Gastrocnemius medialis (tissue), 4 donors: ENCODE measurements at regions of chr1 and their contacts with region 1.

Region 1: GRCh38 chr1:100351095-100351891 is 1.0 kb upstream of the CDC14A start:
- DNase-seq: peak; percentile 69 to 71
- ATAC-seq: peak; percentile 75 to 76
- H3K4me3 ChIP-seq: peak overlapping the region; percentile 94 to 98 (median 96)
- H3K27ac ChIP-seq: peak overlapping the region; percentile 84 to 91 (median 88)
- H3K4me1 ChIP-seq: peaks cover 17 to 20% of the 10 kb centered on the region in 2 donors
- H3K27me3 ChIP-seq: no peaks in the 10 kb centered on the region
- CTCF ChIP-seq: peak in 1 of 5 experiments; percentile 28
- POLR2A ChIP-seq: peak; percentile 19 to 42

Region 2: GRCh38 chr1:100037927-100038659 is 313.2 kb before region 1 on chr1:
- in situ Hi-C with region 1: no loop called
- intact Hi-C with region 1: loop called (anchors 5 kb)
- DNase-seq: peak; percentile 81 to 85
- ATAC-seq: peak; percentile 91 to 93
- H3K4me3 ChIP-seq: peak overlapping the region; percentile 86 to 90 (median 88)
- H3K27ac ChIP-seq: peak overlapping the region; percentile 93 to 96 (median 96)
- H3K4me1 ChIP-seq: peaks cover 24 to 33% of the 10 kb centered on the region in 2 donors
- H3K27me3 ChIP-seq: no peaks in the 10 kb centered on the region
- CTCF ChIP-seq: no peak
- POLR2A ChIP-seq: peak; percentile 94 to 95

Region 3: DNA sequence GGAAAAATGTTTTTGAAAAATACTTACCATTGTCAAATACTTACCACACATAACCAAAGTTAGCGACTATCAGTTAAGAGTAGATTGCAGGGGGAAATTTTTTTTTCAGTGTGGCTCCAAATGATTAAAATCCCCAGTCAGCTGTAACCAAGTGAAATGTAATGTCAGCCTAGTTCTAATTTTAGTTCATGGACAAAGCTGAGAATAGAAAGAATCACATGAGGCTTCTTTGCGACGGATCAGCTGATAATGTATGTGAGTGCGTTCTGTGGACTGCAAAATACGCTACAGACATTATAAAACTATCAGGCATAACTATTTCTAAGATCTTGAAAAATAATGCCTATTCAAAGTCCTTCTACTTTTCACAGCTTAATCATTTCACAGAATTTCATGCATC is 173.2 kb before region 1 on chr1 and contains the start of gene LRRC39:
- in situ Hi-C with region 1: no loop called
- intact Hi-C with region 1: loop called (anchors 5 kb)
- DNase-seq: no peak
- ATAC-seq: peak; percentile 94 to 98
- H3K4me3 ChIP-seq: peak within 1 kb of the TSS; percentile 46 to 55 (median 50)
- H3K27ac ChIP-seq: peak within 1 kb of the TSS; percentile 76 to 89 (median 82)
- H3K4me1 ChIP-seq: peaks cover 6 to 17% of the 10 kb centered on the region in 2 donors
- H3K27me3 ChIP-seq: no peaks in the 10 kb centered on the region
- CTCF ChIP-seq: no peak
- POLR2A ChIP-seq: peak in 1 of 2 donors; percentile 41
- total RNA-seq, gene LRRC39: 23.4 to 73.2 (median 42.1) TPM

Region 4: DNA sequence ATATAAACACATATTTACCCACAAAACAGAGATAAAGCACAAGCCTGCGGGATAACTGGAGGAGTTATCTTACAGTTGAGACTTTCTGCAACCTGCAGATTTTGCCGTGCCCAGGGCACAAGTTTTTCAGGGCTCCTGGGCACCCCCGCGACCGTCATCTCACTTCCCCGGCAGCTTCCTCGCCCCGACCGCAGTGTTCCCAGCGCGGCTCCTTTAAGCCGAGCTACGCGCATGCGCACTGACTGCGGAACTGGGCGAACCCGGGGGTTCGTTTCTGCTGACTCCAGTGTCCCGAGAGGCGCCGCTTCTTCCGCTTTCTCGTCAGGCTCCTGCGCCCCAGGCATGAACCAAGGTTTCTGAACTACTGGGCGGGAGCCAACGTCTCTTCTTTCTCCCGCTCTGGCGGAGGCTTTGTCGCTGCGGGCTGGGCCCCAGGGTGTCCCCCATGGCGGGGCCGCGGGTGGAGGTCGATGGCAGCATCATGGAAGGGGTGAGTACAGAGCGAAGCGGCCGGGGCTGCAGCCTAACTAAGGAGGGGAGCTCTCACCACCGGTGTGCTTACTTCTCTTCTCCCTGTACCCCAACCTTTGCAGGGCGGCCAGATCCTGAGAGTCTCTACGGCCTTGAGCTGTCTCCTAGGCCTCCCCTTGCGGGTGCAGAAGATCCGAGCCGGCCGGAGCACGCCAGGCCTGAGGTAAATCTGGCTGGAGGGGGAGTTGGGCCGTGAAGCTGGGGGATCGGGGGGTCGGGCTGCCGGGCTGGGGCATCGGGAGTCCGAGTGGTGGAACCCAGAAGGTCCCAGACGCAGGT is 85.2 kb before region 1 on chr1 and contains the start of gene RTCA:
- in situ Hi-C with region 1: no loop called
- intact Hi-C with region 1: loop called (anchors 1 kb)
- DNase-seq: peak; percentile 93 to 95
- ATAC-seq: peak; percentile 99
- H3K4me3 ChIP-seq: peak within 1 kb of the TSS; percentile 67 to 100 (median 91)
- H3K27ac ChIP-seq: peak within 1 kb of the TSS; percentile 82 to 93 (median 86)
- H3K4me1 ChIP-seq: peaks cover 15 to 19% of the 10 kb centered on the region in 2 donors
- H3K27me3 ChIP-seq: no peaks in the 10 kb centered on the region
- CTCF ChIP-seq: no peak
- POLR2A ChIP-seq: peak; percentile 64 to 73
- total RNA-seq, gene RTCA: 22.3 to 32.8 (median 24.8) TPM

Region 5: DNA sequence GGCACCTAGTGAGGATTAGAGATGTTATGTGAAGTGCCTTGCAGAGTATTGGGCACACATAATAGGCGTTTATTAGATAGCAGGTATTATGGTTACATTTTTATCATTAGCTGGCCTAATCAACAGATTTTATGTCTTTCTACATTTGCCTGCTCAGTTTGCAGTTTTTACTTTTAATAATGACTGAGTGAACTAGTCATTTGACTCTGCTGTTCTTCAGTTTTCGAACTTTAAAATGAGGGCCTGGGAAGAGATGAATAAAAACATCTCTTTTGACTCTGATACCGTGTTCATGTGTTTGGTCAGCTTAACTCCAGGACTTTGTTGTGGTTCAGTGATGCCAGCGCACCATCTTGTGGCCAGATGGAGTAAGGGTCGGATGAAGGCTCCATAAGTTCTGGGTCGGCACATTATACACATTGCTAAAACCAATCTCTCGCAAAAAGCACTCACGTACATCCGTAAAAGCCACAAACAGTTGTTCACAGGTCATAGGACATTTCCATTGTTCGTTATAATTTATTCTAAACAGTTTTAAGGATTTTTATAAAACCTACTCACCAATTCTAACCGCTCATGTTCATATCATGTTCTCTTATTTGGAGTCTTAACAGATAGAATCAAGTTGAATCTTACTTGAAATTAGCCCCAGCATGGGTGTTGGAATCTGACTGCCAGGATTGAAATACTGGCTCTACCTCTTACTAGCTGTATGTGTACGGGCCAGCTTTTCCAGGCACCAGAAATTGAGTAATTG is 108.2 kb after region 1 on chr1:
- in situ Hi-C with region 1: no loop called
- intact Hi-C with region 1: loop called (anchors 5 kb)
- DNase-seq: peak; percentile 49 to 64
- ATAC-seq: peak; percentile 96 to 98
- H3K4me3 ChIP-seq: no peak overlapping the region
- H3K27ac ChIP-seq: peak overlapping the region; percentile 21 to 63 (median 29)
- H3K4me1 ChIP-seq: peaks cover 0 to 11% of the 10 kb centered on the region in 2 donors
- H3K27me3 ChIP-seq: no peaks in the 10 kb centered on the region
- CTCF ChIP-seq: peak; percentile 76 to 88 (median 81)
- POLR2A ChIP-seq: no peak